Activated CD4-positive, alpha-beta T cell treated with anti-CD3 and anti-CD28 coated beads, Interleukin-2, amount 10 ng/mL, durations not matched to agents 24 days and 14 days (primary cell): ENCODE measurements at regions of chr12 and their contacts with region 1.

Region 1: DNA sequence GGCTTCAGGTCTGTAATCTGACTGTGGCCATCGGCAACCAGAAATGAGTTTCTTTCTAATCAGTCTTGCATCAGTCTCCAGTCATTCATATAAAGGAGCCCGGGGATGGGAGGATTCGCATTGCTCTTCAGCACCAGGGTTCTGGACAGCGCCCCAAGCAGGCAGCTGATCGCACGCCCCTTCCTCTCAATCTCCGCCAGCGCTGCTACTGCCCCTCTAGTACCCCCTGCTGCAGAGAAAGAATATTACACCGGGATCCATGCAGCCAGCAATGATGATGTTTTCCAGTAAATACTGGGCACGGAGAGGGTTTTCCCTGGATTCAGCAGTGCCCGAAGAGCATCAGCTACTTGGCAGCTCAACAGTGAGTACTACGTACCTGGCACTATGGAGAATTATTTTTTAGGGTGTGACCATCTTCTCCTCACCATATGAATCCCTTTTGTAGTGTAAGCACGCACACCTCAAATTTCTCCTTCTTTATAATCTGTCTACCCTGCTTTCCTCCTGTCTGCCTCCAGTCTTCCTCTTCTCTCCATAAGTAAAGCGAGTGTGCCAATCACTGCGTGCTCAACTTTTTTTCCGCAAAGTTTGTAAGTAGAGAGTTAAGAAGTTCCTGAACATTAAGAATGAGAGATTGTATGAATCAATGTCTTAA is at the start of gene TPH2:
- DNase-seq: peak; percentile 88
- H3K4me3 Mint-ChIP-seq: no peak within 1 kb of the TSS
- H3K27ac Mint-ChIP-seq: no peak within 1 kb of the TSS
- H3K4me1 Mint-ChIP-seq: peaks cover 10% of the 10 kb centered on the region
- H3K27me3 Mint-ChIP-seq: peaks cover 40% of the 10 kb centered on the region
- total RNA-seq, gene TPH2: not detected in 2 replicates

Region 2: DNA sequence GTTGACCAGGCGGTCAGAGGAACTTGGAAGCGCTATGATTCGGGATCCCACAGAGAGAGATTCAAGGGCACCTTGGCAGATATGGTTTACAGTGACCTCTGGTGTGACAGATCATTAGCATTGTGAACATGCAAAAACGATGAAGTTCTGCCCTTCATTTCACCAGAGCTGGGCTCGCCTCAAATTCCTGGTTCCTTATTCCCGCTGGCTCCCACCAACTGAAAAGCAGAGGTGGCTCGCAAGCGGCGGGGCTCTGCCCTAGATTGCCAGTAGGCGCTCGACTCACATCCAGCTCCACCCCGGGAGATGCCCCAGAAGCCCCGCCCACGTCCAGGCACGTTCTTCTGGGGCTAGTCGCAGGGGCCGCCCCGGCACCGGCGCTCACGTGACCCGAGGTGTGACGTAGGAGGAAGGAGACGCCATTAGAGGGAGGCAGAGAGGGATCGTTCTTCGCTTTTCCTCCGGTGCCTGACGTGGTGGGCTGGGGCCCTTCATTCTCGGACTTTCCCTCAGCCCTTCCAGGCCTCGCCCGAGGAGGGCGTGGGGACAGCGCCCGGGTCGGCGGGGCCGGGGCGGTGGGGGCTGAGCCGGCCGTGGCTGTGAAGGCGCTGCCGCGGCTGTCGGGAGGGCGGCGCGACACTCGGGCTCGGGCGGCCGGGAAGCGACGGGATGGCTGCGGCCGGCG is 184.3 kb before region 1 on chr12 and contains the start of gene RAB21:
- intact Hi-C with region 1: loop called (anchors 1 kb)
- DNase-seq: peak; percentile 99
- H3K4me3 Mint-ChIP-seq: peak within 1 kb of the TSS; percentile 93
- H3K27ac Mint-ChIP-seq: peak within 1 kb of the TSS; percentile 97
- H3K4me1 Mint-ChIP-seq: peaks cover 23% of the 10 kb centered on the region
- H3K27me3 Mint-ChIP-seq: peaks cover 25% of the 10 kb centered on the region
- total RNA-seq, gene RAB21: 91.7 and 92.4 TPM in 2 replicates

Region 3: GRCh38 chr12:71780237-71780822 is 158.5 kb before region 1 on chr12:
- intact Hi-C with region 1: loop called (anchors 1 kb)
- DNase-seq: peak; percentile 80
- H3K4me3 Mint-ChIP-seq: no peak overlapping the region
- H3K27ac Mint-ChIP-seq: no peak overlapping the region
- H3K4me1 Mint-ChIP-seq: peaks cover 3% of the 10 kb centered on the region
- H3K27me3 Mint-ChIP-seq: no peaks in the 10 kb centered on the region